ENCODE measurements at regions of chr2 and their contacts with region 1.

Region 1: GRCh38 chr2:207296265-207296948 is 130.7 kb upstream of the KLF7 start:
- DNase-seq: no peak
- H3K4me3 ChIP-seq: no peak overlapping the region
- CTCF ChIP-seq: no peak

Region 2: DNA sequence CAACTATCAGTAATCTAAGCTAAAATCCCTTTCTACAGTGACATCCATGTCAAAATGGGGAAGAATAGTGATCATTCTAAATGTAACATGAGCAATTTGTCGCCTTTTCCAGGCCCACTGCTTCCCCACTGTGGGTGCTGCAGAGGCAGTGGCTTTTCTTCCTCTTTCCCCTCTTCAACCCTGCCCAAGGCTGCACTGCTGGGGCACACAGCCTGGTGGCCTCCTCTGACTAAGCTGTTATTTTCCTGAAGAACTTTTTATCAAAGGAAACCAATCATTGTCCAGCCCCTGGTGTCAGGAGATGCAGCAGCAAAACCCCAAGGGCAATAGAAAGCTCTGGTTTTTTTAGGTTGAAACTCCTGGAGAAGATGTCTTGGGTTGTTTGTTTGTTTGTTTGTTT is 13.1 kb before region 1 on chr2:
- CTCF ChIA-PET with region 1: interaction called, 20 read pairs
- POLR2A ChIA-PET with region 1: no interaction called
- DNase-seq: no peak
- H3K4me3 ChIP-seq: no peak overlapping the region
- CTCF ChIP-seq: no peak

Region 3: GRCh38 chr2:207317378-207317984 is 21.1 kb after region 1 on chr2:
- CTCF ChIA-PET with region 1: no interaction called
- POLR2A ChIA-PET with region 1: no interaction called
- DNase-seq: no peak
- H3K4me3 ChIP-seq: no peak overlapping the region
- CTCF ChIP-seq: no peak